ENCODE measurements at regions of chr17 and their contacts with region 1.

Region 1: GRCh38 chr17:7561028-7561575 is 617 bp upstream of the SENP3 start:
- DNase-seq: peak; percentile 77 to 87 (median 82)
- ATAC-seq: peak; percentile 89
- H3K4me3 ChIP-seq: peak overlapping the region; percentile 76
- H3K27ac ChIP-seq: peak overlapping the region; percentile 81
- H3K4me1 ChIP-seq: peaks cover 10 to 52% of the 10 kb centered on the region in 2 experiments; a peak in 4 of 5 replicates
- H3K27me3 ChIP-seq: no peaks in the 10 kb centered on the region
- CTCF ChIP-seq: peak; percentile 76 to 86 (median 79)
- EP300 ChIP-seq: no peak
- POLR2A ChIP-seq: no peak
- RAD21 ChIP-seq: peak; percentile 77 to 79

Region 2: GRCh38 chr17:7035591-7036368 is 525.3 kb before region 1 on chr17 and contains the start of gene SLC16A13:
- CTCF ChIA-PET with region 1: no interaction called
- POLR2A ChIA-PET with region 1: no interaction called
- in situ Hi-C with region 1: loop called (anchors 25 kb)
- intact Hi-C with region 1: no loop called
- DNase-seq: peak; percentile 95 to 99 (median 96)
- ATAC-seq: peak; percentile 95
- H3K4me3 ChIP-seq: peak within 1 kb of the TSS; percentile 77
- H3K27ac ChIP-seq: peak within 1 kb of the TSS; percentile 90
- H3K4me1 ChIP-seq: peaks cover 11 to 20% of the 10 kb centered on the region in 2 experiments; a peak in 4 of 5 replicates
- H3K27me3 ChIP-seq: no peaks in the 10 kb centered on the region
- CTCF ChIP-seq: no peak
- EP300 ChIP-seq: no peak
- POLR2A ChIP-seq: peak; percentile 94
- RAD21 ChIP-seq: no peak
- polyA plus RNA-seq, gene SLC16A13: 0.04 to 0.18 TPM

Region 3: GRCh38 chr17:7351665-7352501 is 209.2 kb before region 1 on chr17 and contains the start of gene KCTD11:
- CTCF ChIA-PET with region 1: interaction called, 9 read pairs
- POLR2A ChIA-PET with region 1: no interaction called
- in situ Hi-C with region 1: loop called (anchors 10 kb)
- intact Hi-C with region 1: loop called (anchors 5 kb)
- DNase-seq: peak; percentile 88 to 91 (median 88)
- ATAC-seq: peak; percentile 86
- H3K4me3 ChIP-seq: peak within 1 kb of the TSS; percentile 72
- H3K27ac ChIP-seq: peak within 1 kb of the TSS; percentile 88
- H3K4me1 ChIP-seq: peaks cover 3 to 70% of the 10 kb centered on the region in 2 experiments; a peak in 3 of 5 replicates
- H3K27me3 ChIP-seq: no peaks in the 10 kb centered on the region
- CTCF ChIP-seq: peak in 2 of 3 experiments; percentile 52 to 54; a peak in 4 of 6 replicates
- EP300 ChIP-seq: no peak
- POLR2A ChIP-seq: peak; percentile 66
- RAD21 ChIP-seq: peak in 1 of 2 experiments; percentile 13; a peak in 1 of 4 replicates
- polyA plus RNA-seq, gene KCTD11: 0.01 TPM in 1 of 2 experiments, not detected in the other

Region 4: DNA sequence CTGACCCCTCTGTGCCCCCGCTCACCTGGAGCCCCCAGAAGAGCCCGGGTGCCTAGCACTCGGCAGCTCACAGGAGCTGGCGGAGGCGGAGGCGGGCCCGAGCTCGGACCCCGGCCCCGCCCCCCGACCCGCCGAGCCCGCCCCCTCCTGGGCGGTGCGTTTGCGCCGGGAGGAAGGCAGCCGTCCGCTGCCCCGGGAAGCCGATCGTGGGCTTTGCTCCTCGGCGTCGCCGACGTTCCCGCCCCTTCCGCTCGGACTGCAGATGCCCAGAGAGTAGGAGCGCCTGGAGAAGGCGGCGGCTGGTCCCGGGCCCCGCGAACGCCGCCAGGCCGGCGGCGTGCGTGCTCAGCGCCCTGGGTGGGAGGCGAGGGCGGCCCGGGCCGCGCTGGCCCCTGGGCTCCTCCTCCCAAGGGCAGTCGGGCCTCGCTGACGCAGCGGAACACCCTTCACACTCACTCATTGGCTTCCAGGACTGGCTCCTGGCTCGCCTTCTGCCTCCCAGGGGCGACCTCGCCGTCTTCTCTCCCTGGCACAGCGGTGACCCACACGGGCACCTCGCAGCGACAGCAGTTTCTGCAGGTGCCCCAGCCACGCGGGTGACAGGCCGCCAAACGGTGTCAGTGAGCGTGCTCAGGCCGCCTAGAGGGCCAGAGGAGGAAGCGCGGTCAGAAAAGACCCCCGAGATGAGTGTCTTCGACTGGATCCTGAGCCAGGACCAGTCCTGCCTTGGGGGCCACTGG is 166.5 kb before region 1 on chr17 and contains the start of gene PLSCR3:
- CTCF ChIA-PET with region 1: no interaction called
- POLR2A ChIA-PET with region 1: no interaction called
- in situ Hi-C with region 1: no loop called
- intact Hi-C with region 1: no loop called
- DNase-seq: peak; percentile 84 to 91 (median 88)
- ATAC-seq: peak; percentile 97
- H3K4me3 ChIP-seq: peak within 1 kb of the TSS; percentile 68
- H3K27ac ChIP-seq: peak within 1 kb of the TSS; percentile 79
- H3K4me1 ChIP-seq: peaks cover 3 to 24% of the 10 kb centered on the region in 2 experiments; a peak in 4 of 5 replicates
- H3K27me3 ChIP-seq: no peaks in the 10 kb centered on the region
- CTCF ChIP-seq: peak; percentile 25 to 53 (median 44); a peak in 4 of 6 replicates
- EP300 ChIP-seq: no peak
- POLR2A ChIP-seq: peak; percentile 66; the same call in 1 of the 2 replicates
- RAD21 ChIP-seq: 0 out of 4 replicates have a peak, but pooled peaks of 1 of the 2 experiments have one; percentile 10
- polyA plus RNA-seq, gene PLSCR3: 3.2 to 3.3 TPM

Region 5: DNA sequence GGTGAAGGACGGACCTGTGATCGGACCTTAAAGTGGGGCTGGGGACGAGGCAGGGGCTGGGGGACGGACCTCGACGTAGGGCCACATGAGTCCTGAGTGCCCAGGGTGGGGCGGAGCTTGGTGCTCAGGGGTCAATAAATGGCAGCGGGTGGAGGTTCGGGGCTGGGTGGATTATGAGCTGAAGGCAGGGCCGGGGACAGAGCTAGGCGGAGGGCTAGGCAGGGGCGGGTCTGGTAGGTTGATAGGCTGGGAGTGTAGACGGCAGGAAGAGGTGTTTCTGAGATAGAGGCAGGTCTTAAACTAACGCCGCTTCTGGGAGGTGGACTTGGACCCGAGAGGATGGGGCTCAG is 115.5 kb before region 1 on chr17:
- CTCF ChIA-PET with region 1: no interaction called
- POLR2A ChIA-PET with region 1: no interaction called
- in situ Hi-C with region 1: no loop called
- intact Hi-C with region 1: no loop called
- DNase-seq: peak in 2 of 4 experiments; percentile 68 to 74
- ATAC-seq: peak; percentile 81
- H3K4me3 ChIP-seq: peak overlapping the region; percentile 35
- H3K27ac ChIP-seq: peak overlapping the region; percentile 30; the same call in 2 of the 3 replicates
- H3K4me1 ChIP-seq: peaks cover 11 to 40% of the 10 kb centered on the region in 2 experiments; a peak in 4 of 5 replicates
- H3K27me3 ChIP-seq: no peaks in the 10 kb centered on the region
- CTCF ChIP-seq: no peak
- EP300 ChIP-seq: no peak
- POLR2A ChIP-seq: peak; percentile 49; the same call in 1 of the 2 replicates
- RAD21 ChIP-seq: no peak

Region 6: DNA sequence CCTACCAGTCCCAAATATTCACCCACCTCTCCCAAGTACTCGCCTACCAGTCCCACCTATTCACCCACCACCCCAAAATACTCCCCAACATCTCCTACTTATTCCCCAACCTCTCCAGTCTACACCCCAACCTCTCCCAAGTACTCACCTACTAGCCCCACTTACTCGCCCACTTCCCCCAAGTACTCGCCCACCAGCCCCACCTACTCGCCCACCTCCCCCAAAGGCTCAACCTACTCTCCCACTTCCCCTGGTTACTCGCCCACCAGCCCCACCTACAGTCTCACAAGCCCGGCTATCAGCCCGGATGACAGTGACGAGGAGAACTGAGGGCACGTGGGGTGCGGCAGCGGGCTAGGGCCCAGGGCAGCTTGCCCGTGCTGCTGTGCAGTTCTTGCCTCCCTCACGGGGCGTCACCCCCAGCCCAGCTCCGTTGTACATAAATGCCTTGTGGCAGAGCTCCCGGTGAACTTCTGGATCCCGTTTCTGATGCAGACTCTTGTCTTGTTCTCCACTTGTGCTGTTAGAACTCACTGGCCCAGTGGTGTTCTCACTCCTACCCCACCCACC is 47.2 kb before region 1 on chr17:
- CTCF ChIA-PET with region 1: interaction called, 16 read pairs
- POLR2A ChIA-PET with region 1: interaction called, 5 read pairs
- in situ Hi-C with region 1: no loop called
- intact Hi-C with region 1: loop called (anchors 1 kb)
- DNase-seq: peak in 1 of 4 experiments; percentile 11
- ATAC-seq: no peak
- H3K4me3 ChIP-seq: no peak overlapping the region
- H3K27ac ChIP-seq: no peak overlapping the region
- H3K4me1 ChIP-seq: no peaks in the 10 kb centered on the region; a peak in 1 of 5 replicates
- H3K27me3 ChIP-seq: no peaks in the 10 kb centered on the region
- CTCF ChIP-seq: no peak
- EP300 ChIP-seq: no peak
- POLR2A ChIP-seq: no peak
- RAD21 ChIP-seq: no peak

Region 7: DNA sequence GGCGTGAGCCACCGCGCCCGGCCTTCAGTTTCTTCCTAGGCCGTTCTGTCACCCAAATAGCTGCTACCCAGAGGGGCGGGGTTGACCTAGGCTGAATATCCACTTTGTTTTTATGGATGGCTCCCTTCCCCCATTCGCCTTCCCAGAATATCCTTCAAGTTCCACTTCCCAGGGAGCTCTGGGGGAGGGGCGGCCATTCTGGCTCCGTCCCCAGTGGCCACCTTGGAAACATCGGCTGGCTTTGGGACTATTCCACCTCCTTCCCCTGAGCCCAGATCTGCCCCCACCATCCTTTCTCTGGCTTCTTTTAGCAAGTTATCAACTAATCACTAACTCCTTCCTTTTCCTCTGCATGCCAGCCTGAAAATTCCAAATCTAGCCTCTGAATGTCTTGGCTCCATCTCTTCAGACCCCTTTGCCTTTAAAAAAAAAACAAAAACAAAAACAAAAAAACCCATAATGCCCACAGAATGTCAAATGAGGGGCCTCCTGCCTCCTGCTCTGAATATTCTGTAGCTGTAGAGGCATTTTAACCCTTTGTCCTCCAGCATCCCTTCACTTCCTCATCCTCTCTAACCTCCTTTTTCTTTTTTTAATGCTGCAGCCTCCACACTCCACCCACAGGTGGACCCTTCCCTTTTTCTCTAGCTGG is 96.0 kb after region 1 on chr17:
- CTCF ChIA-PET with region 1: no interaction called
- POLR2A ChIA-PET with region 1: no interaction called
- in situ Hi-C with region 1: no loop called
- intact Hi-C with region 1: no loop called
- DNase-seq: peak in 1 of 4 experiments; percentile 3
- ATAC-seq: no peak
- H3K4me3 ChIP-seq: no peak overlapping the region
- H3K27ac ChIP-seq: no peak overlapping the region
- H3K4me1 ChIP-seq: peaks cover 0 to 8% of the 10 kb centered on the region in 2 experiments; a peak in 3 of 5 replicates
- H3K27me3 ChIP-seq: no peaks in the 10 kb centered on the region
- CTCF ChIP-seq: no peak
- EP300 ChIP-seq: no peak
- POLR2A ChIP-seq: no peak
- RAD21 ChIP-seq: no peak

Region 8: DNA sequence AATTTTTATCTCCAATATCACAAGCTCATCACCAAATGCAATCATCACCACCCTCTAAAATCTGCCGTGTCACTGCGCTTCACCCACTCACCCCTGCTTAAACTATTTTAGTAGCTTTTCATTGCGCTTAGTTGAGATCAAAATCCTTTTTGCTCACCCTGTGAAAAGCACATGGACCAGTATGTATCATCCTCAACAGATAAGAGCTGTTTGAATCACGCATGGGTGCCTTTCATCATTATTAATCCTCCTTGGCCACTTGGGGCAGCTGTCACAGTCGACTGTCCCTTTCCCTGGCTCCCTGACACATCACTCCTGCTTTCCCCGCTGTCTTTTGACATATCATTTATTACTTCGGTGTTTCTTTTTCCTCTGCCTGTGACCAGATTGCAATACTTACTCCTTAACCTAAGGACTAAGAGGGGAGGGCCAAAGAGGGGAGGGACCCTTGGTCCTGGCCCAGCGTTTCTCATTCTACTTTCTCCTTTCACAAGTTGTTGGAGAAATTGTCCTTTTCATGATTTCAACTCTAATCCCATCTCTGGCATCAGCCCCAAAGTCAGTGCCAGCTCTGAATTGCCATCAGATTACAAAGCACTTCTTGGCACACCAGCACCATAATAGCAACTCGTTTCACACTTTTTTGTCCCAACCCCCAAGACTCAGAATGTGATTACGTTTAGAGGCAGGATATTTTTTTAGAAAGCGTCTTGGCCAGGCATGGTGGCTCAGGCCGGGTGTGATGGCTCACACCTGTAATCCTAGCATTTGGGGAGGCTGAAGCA is 264.3 kb after region 1 on chr17:
- CTCF ChIA-PET with region 1: no interaction called
- POLR2A ChIA-PET with region 1: no interaction called
- in situ Hi-C with region 1: no loop called
- intact Hi-C with region 1: no loop called
- DNase-seq: peak in 1 of 4 experiments; percentile 29
- ATAC-seq: 0 out of 3 replicates have a peak, but pooled peaks have one; percentile 47
- H3K4me3 ChIP-seq: no peak overlapping the region
- H3K27ac ChIP-seq: no peak overlapping the region
- H3K4me1 ChIP-seq: peaks cover 0 to 9% of the 10 kb centered on the region in 2 experiments; a peak in 2 of 5 replicates
- H3K27me3 ChIP-seq: peaks cover 9 to 32% of the 10 kb centered on the region in 2 experiments; a peak in 4 of 5 replicates
- CTCF ChIP-seq: peak; percentile 16 to 42 (median 35); a peak in 3 of 6 replicates
- EP300 ChIP-seq: no peak
- POLR2A ChIP-seq: no peak
- RAD21 ChIP-seq: no peak